GM18951 (cell line): ENCODE measurements at regions of chr6 and their contacts with region 1.

Region 1: DNA sequence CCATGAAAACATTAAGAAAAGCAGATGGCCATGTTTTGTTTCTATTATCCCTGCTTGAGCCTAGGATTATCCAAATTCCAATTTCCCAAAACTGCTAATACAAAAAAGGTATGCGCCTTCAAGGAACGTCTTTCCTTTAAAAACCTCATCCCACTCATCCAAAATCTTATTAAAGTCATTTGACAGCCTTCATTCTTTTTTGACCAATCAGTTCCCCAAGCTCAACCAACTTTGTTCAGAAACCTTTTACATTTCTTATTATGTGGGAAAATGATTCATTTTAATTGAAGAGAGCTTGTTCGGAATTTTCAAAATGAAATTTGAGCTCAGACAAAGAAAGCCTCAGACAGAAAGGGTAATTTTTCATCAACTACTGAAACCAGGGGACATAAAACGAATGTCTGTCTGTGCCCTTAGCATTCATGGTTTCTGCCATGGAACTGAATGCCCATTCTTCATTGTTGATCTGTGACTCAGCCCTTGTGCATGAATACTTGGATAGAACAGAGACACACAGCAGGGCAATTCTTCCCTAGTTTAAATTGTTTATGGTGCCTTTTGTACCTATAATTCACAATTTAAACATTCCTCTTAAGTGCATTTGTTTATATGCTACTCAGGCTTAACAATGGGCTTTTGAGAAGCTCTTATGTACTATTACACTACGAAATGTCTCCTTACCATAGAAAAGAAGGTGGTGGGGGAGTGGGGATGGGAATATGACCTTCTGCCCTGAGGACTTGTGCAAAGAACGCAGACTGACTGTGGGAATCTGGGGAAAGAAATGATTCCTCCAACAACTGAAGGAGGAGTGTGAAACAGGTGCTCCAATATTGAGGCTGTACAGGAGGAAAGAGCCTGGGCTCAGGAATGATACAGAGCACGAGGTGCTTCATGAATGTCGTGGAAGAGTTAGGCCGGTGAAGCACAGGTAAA is 49.8 kb upstream of the ERVFRD-1 start:
- POLR2A ChIP-seq: no peak

Region 2: GRCh38 chr6:11496152-11497060 is 335.1 kb after region 1 on chr6:
- in situ Hi-C with region 1: loop called (anchors 10 kb)
- POLR2A ChIP-seq: no peak